ENCODE measurements at regions of chr22 and their contacts with region 1.

Region 1: DNA sequence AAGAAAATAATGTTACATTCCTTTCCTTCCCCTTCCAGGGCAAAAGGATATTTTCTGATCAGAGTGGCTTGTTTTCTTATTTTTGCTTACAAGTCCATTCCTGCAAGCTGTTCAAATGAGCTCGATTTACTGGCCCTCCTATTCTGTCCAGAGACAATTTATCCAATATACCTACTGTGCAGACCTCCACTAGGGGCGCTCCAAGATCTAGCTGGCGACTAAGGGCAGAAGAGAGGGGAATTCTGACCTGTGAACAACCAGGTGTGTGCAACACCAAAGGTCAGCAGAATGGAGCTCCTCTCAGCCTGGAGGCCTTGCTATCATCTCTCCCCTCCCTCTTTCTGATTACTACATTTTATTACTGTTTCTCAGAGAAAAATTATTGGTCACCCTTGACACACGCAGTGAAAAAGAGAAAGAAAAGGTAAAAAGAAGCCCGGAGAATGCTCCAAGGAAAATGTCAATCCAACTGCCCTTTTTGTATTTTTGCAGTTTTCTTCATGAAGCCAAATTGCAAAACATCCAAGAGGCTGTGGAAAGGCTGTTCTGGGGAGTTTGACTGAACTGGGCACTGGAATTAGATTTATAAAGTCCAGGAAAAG is 3.2 kb downstream of the SEZ6L start:
- DNase-seq: peak; percentile 76
- ATAC-seq: peak; percentile 44
- H3K4me3 Mint-ChIP-seq: no peak overlapping the region
- H3K27ac Mint-ChIP-seq: no peak overlapping the region
- H3K4me1 Mint-ChIP-seq: peaks cover 34% of the 10 kb centered on the region
- H3K27me3 Mint-ChIP-seq: peaks cover 55% of the 10 kb centered on the region
- CTCF ChIP-seq: peak; percentile 67

Region 2: GRCh38 chr22:25772288-25772687 is 400.2 kb before region 1 on chr22:
- CTCF ChIA-PET with region 1: interaction called, 14 read pairs
- POLR2A ChIA-PET with region 1: no interaction called
- DNase-seq: no peak
- ATAC-seq: no peak
- H3K4me3 Mint-ChIP-seq: no peak overlapping the region
- H3K27ac Mint-ChIP-seq: no peak overlapping the region
- H3K4me1 Mint-ChIP-seq: peaks cover 4% of the 10 kb centered on the region
- H3K27me3 Mint-ChIP-seq: peaks cover 2% of the 10 kb centered on the region
- CTCF ChIP-seq: no peak

Region 3: DNA sequence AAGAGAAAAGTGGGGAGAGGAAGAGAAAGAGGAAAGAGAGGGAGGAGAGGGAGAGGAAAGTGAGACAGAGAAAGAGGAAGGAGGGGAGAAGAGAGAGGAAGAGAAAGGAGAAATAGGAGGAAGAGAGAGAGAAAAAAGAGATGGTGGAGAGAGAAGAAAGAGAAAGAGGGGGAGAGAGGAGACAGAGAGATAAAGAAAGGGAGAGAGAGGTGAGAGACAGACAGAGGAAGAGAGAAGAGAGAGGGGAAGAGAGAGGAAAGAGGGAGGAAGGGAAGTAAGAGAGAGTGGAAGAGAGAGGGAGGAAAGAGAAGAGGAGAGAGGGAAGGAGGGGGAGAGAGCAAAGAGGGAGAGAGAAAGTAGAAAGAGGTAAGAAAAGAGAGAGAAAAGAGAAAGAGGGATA is 12.6 kb before region 1 on chr22:
- CTCF ChIA-PET with region 1: interaction called, 11 read pairs
- POLR2A ChIA-PET with region 1: no interaction called
- DNase-seq: no peak
- ATAC-seq: no peak
- H3K4me3 Mint-ChIP-seq: no peak overlapping the region
- H3K27ac Mint-ChIP-seq: no peak overlapping the region
- H3K4me1 Mint-ChIP-seq: peaks cover 8% of the 10 kb centered on the region
- H3K27me3 Mint-ChIP-seq: peaks cover 12% of the 10 kb centered on the region
- CTCF ChIP-seq: no peak

Region 4: DNA sequence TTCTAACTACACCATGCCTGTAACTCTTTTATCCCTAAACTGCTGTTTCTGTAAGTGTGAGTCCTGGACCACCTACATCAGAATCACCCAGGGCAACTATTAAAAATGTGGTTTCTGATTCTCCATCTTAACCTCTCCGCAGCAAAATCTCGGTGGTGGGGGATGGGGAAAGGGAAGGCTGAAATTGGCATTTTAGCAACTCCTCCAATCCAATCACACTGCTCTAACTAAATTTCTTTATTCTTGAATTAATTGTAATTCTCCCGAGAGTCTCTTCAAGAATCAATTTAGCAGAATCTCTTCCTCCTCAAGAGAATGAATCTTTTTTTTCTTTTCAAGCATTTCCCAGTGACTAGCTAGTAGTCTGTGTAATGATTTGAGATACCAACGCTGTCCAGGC is 33.0 kb after region 1 on chr22:
- CTCF ChIA-PET with region 1: interaction called, 10 read pairs
- POLR2A ChIA-PET with region 1: no interaction called
- DNase-seq: no peak
- ATAC-seq: no peak
- H3K4me3 Mint-ChIP-seq: no peak overlapping the region
- H3K27ac Mint-ChIP-seq: no peak overlapping the region
- H3K4me1 Mint-ChIP-seq: no peaks in the 10 kb centered on the region
- H3K27me3 Mint-ChIP-seq: peaks cover 2% of the 10 kb centered on the region; the same call in 1 of the 2 replicates
- CTCF ChIP-seq: no peak

Region 5: GRCh38 chr22:26295563-26296126 is 123.2 kb after region 1 on chr22:
- CTCF ChIA-PET with region 1: interaction called, 13 read pairs
- POLR2A ChIA-PET with region 1: no interaction called
- DNase-seq: no peak
- ATAC-seq: no peak
- H3K4me3 Mint-ChIP-seq: no peak overlapping the region
- H3K27ac Mint-ChIP-seq: no peak overlapping the region
- H3K4me1 Mint-ChIP-seq: peaks cover 30% of the 10 kb centered on the region
- H3K27me3 Mint-ChIP-seq: no peaks in the 10 kb centered on the region
- CTCF ChIP-seq: no peak

Region 6: GRCh38 chr22:26330966-26331625 is 158.6 kb after region 1 on chr22:
- CTCF ChIA-PET with region 1: interaction called, 150 read pairs
- POLR2A ChIA-PET with region 1: no interaction called
- DNase-seq: peak; percentile 81
- ATAC-seq: peak; percentile 94
- H3K4me3 Mint-ChIP-seq: no peak overlapping the region
- H3K27ac Mint-ChIP-seq: no peak overlapping the region
- H3K4me1 Mint-ChIP-seq: no peaks in the 10 kb centered on the region
- H3K27me3 Mint-ChIP-seq: peaks cover 23% of the 10 kb centered on the region
- CTCF ChIP-seq: peak; percentile 93